ENCODE measurements at regions of chr1 and their contacts with region 1.

Region 1: DNA sequence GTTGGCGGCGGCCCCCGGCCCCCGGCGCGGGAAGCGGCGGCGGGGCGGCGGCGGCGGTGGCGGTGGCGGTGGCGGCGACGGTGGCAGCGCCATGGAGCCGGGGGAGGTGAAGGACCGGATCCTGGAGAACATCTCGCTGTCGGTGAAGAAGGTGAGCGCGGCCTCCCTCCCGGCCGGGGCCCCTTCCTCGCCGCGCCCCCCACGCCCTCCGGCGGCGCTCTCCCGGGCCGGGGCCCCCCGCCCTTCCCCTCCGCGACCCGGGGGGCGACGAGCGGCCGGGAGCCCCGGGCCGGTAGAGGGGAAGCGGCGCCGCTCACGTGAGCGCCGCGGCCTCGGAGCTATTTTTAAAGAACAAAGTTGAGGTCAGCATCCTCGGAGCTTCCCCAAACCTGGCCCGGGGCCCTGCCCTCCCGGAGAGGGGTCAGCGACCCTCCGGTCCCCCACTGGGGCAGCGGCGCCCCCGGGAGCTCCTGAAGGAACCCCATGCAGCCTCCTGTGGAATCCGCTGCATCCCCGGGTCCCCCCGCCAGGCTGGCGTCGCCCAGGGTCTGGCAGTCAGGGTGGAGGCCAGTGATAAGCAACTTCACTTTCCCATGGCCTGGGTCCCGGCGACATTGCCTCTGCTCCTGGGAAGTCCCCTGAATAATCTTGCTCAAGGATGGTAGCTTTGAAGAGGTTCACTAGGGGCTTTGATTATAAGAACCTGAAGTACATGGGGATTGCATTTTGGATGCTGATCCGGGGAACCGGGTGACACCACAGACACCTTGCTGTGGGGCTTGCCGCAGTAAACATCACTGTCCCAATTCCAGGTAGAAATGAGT is 560 bp downstream of the PLEKHM2 start:
- DNase-seq: peak in 1 of 2 experiments; percentile 30
- H3K4me3 ChIP-seq: peak overlapping the region; percentile 60
- H3K4me3 Mint-ChIP-seq: peak overlapping the region; percentile 73
- H3K27ac Mint-ChIP-seq: peak overlapping the region; percentile 57
- H3K4me1 ChIP-seq: peaks cover 31% of the 10 kb centered on the region
- H3K4me1 Mint-ChIP-seq: peaks cover 32% of the 10 kb centered on the region
- H3K27me3 ChIP-seq: no peaks in the 10 kb centered on the region
- H3K27me3 Mint-ChIP-seq: no peaks in the 10 kb centered on the region
- CTCF ChIP-seq: no peak

Region 2: GRCh38 chr1:15272009-15272788 is 412.5 kb before region 1 on chr1:
- CTCF ChIA-PET with region 1: no interaction called
- POLR2A ChIA-PET with region 1: no interaction called
- intact Hi-C with region 1: no loop called
- DNase-seq: peak; percentile 66 to 72
- H3K4me3 ChIP-seq: no peak overlapping the region
- H3K4me3 Mint-ChIP-seq: peak overlapping the region; percentile 50
- H3K27ac Mint-ChIP-seq: no peak overlapping the region
- H3K4me1 ChIP-seq: no peaks in the 10 kb centered on the region
- H3K4me1 Mint-ChIP-seq: no peaks in the 10 kb centered on the region
- H3K27me3 ChIP-seq: no peaks in the 10 kb centered on the region
- H3K27me3 Mint-ChIP-seq: no peaks in the 10 kb centered on the region
- CTCF ChIP-seq: peak; percentile 67 to 78

Region 3: DNA sequence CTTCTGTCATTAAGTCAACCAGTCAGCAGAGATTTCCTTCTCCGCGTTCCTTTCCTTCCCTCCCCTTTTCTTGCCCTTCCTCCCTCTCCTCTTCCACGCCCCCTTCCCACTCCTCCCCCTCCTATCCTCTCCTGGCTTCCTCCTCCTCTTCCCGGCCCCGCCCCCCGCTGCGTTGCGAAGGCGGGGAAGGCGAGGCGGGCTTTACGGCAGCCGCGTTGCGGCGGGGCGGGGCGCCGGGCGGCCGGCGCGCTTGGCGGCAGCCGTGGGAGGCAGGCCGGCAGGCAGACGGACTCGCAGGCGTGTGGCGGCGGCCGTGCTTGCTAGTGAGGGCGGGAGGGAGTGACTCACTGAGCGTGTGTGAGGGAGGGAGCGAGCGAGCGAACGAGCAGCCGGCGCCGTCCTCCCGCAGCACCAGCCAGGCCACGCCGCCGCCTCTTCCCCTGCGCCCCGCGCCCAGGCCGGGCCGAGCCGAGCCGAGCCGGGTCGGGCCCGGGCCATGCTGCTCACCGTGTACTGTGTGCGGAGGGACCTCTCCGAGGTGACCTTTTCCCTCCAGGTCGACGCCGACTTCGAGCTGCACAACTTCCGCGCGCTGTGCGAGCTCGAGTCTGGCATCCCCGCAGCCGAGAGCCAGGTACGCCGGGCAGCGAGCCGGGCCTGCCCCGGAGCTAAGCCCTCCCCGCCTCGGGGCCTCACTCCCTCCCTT is 67.4 kb before region 1 on chr1 and contains the start of gene DDI2:
- CTCF ChIA-PET with region 1: no interaction called
- POLR2A ChIA-PET with region 1: no interaction called
- intact Hi-C with region 1: no loop called
- DNase-seq: peak; percentile 96 to 97
- H3K4me3 ChIP-seq: peak within 1 kb of the TSS; percentile 95
- H3K4me3 Mint-ChIP-seq: peak within 1 kb of the TSS; percentile 88
- H3K27ac Mint-ChIP-seq: peak within 1 kb of the TSS; percentile 86
- H3K4me1 ChIP-seq: peaks cover 33% of the 10 kb centered on the region
- H3K4me1 Mint-ChIP-seq: peaks cover 27% of the 10 kb centered on the region
- H3K27me3 ChIP-seq: no peaks in the 10 kb centered on the region
- H3K27me3 Mint-ChIP-seq: no peaks in the 10 kb centered on the region
- CTCF ChIP-seq: no peak
- total RNA-seq, gene DDI2: 53.1 and 53.4 TPM in 2 replicates

Region 4: GRCh38 chr1:15668089-15668754 is 16.5 kb before region 1 on chr1:
- CTCF ChIA-PET with region 1: no interaction called
- POLR2A ChIA-PET with region 1: no interaction called
- intact Hi-C with region 1: no loop called
- DNase-seq: no peak
- H3K4me3 ChIP-seq: no peak overlapping the region
- H3K4me3 Mint-ChIP-seq: no peak overlapping the region
- H3K27ac Mint-ChIP-seq: no peak overlapping the region
- H3K4me1 ChIP-seq: no peaks in the 10 kb centered on the region
- H3K4me1 Mint-ChIP-seq: no peaks in the 10 kb centered on the region
- H3K27me3 ChIP-seq: no peaks in the 10 kb centered on the region
- H3K27me3 Mint-ChIP-seq: no peaks in the 10 kb centered on the region
- CTCF ChIP-seq: no peak

Region 5: GRCh38 chr1:15735304-15736037 is 50.8 kb after region 1 on chr1:
- CTCF ChIA-PET with region 1: no interaction called
- POLR2A ChIA-PET with region 1: interaction called, 10 read pairs
- intact Hi-C with region 1: loop called (anchors 10 kb)
- DNase-seq: no peak
- H3K4me3 ChIP-seq: no peak overlapping the region
- H3K4me3 Mint-ChIP-seq: no peak overlapping the region
- H3K27ac Mint-ChIP-seq: no peak overlapping the region
- H3K4me1 ChIP-seq: peaks cover 10% of the 10 kb centered on the region
- H3K4me1 Mint-ChIP-seq: no peaks in the 10 kb centered on the region
- H3K27me3 ChIP-seq: no peaks in the 10 kb centered on the region
- H3K27me3 Mint-ChIP-seq: no peaks in the 10 kb centered on the region
- CTCF ChIP-seq: no peak

Region 6: DNA sequence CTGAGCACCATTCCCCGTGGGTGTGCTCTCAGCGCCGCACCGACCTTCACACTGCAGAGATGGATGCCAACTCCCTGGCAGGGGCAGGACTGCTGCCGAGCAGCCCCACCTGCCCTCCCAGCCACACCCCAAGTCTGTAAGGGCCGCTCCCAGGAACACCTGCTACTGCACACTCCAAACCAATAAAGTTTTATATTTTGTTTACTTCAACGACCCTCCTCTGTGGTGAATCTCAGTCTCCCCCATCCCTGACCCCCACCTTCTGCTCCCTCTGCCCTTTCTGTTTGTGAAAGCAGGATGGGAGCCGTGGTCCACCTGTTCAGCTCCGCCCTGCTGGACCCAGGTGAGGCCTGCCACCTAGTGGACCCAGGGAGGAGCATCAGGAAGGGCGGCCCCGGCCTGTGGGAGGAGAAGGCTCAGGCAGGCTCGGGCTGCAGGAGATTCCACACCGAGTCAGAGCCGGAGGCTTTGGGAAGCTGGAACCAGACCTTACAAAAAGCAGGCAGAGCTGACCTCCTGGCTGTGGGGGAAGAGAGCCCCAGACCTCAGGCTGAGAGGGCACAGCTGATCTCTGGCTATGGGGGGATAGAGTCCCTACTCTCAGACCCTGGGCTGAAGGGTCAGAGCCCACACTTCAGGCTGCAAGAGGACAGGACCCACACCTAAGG is 56.6 kb after region 1 on chr1:
- CTCF ChIA-PET with region 1: no interaction called
- POLR2A ChIA-PET with region 1: no interaction called
- intact Hi-C with region 1: loop called (anchors 10 kb)
- DNase-seq: peak; percentile 89
- H3K4me3 ChIP-seq: peak overlapping the region; percentile 0; the same call in 1 of the 2 replicates
- H3K4me3 Mint-ChIP-seq: peak overlapping the region; percentile 66
- H3K27ac Mint-ChIP-seq: peak overlapping the region; percentile 82
- H3K4me1 ChIP-seq: peaks cover 17% of the 10 kb centered on the region
- H3K4me1 Mint-ChIP-seq: peaks cover 7% of the 10 kb centered on the region
- H3K27me3 ChIP-seq: no peaks in the 10 kb centered on the region
- H3K27me3 Mint-ChIP-seq: no peaks in the 10 kb centered on the region
- CTCF ChIP-seq: peak; percentile 82 to 92

Measured in Caco-2 (cell line).